Panc1 (cell line): ENCODE measurements at regions of chr3 and their contacts with region 1.

Region 1: DNA sequence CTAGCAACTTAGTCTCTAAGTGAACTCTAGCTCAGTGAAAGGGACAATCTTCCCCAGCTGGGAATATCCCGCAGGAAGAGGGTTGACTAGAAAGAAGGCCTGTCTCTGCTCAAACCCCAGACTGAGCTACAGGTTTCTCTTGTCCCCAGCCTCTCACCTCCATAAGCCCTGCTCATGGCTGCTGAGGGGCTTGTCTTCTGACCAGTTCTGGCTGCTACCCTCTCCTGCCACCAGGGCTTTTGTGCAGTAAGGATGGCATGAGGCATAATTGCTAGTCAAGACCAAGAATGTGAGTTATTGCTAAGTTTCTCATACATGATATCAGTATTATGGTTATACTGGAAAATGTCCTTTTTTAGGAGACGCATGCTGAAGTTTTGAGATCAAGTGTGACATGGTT is 21.3 kb downstream of the WDR53 start:
- DNase-seq: no peak
- ATAC-seq: no peak; the same call in 1 of the 2 replicates
- H3K4me3 ChIP-seq: no peak overlapping the region
- H3K27ac ChIP-seq: no peak overlapping the region
- H3K4me1 ChIP-seq: no peaks in the 10 kb centered on the region
- H3K27me3 ChIP-seq: no peaks in the 10 kb centered on the region
- CTCF ChIP-seq: no peak

Region 2: GRCh38 chr3:195421393-195421792 is 1125.7 kb before region 1 on chr3:
- CTCF ChIA-PET with region 1: interaction called, 10 read pairs
- POLR2A ChIA-PET with region 1: no interaction called
- in situ Hi-C with region 1: no loop called
- intact Hi-C with region 1: no loop called
- DNase-seq: no peak
- ATAC-seq: no peak
- H3K4me3 ChIP-seq: no peak overlapping the region
- H3K27ac ChIP-seq: no peak overlapping the region
- H3K4me1 ChIP-seq: no peaks in the 10 kb centered on the region
- H3K27me3 ChIP-seq: no peaks in the 10 kb centered on the region
- CTCF ChIP-seq: no peak

Region 3: GRCh38 chr3:196585044-196585757 is 38.1 kb after region 1 on chr3:
- CTCF ChIA-PET with region 1: no interaction called
- POLR2A ChIA-PET with region 1: no interaction called
- in situ Hi-C with region 1: no loop called
- intact Hi-C with region 1: no loop called
- DNase-seq: no peak
- ATAC-seq: no peak
- H3K4me3 ChIP-seq: no peak overlapping the region
- H3K27ac ChIP-seq: no peak overlapping the region
- H3K4me1 ChIP-seq: no peaks in the 10 kb centered on the region
- H3K27me3 ChIP-seq: no peaks in the 10 kb centered on the region
- CTCF ChIP-seq: no peak

Region 4: DNA sequence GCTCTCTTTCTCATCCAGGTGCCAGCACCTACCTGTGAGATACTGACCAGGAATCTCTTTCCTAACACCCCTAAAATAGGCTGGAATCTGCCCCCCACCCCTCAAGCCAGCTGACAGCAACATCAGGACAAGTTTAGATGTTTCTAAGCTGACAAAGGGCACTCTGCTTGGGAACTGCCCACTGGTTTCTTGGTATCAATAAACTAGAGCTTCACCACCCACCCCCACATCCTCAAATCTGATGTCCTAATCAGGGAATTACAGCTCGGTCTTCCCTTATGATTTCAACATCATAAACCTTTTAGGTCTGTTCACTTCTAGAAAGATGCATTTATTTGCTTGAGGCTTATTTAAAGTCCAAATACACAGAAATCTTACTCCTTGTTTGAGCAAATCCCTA is 130.3 kb after region 1 on chr3:
- CTCF ChIA-PET with region 1: no interaction called
- POLR2A ChIA-PET with region 1: interaction called, 12 read pairs
- in situ Hi-C with region 1: no loop called
- intact Hi-C with region 1: no loop called
- DNase-seq: no peak
- ATAC-seq: no peak
- H3K4me3 ChIP-seq: no peak overlapping the region
- H3K27ac ChIP-seq: no peak overlapping the region
- H3K4me1 ChIP-seq: no peaks in the 10 kb centered on the region
- H3K27me3 ChIP-seq: no peaks in the 10 kb centered on the region
- CTCF ChIP-seq: no peak